ENCODE measurements at regions of chr5 and their contacts with region 1.

Region 1: GRCh38 chr5:175873088-175873454 is 1.7 kb downstream of the CPLX2 start:
- DNase-seq: peak; percentile 65
- H3K4me3 Mint-ChIP-seq: no peak overlapping the region
- H3K27ac Mint-ChIP-seq: no peak overlapping the region
- H3K4me1 Mint-ChIP-seq: peaks cover 2% of the 10 kb centered on the region
- H3K27me3 Mint-ChIP-seq: peaks cover 64% of the 10 kb centered on the region

Region 2: DNA sequence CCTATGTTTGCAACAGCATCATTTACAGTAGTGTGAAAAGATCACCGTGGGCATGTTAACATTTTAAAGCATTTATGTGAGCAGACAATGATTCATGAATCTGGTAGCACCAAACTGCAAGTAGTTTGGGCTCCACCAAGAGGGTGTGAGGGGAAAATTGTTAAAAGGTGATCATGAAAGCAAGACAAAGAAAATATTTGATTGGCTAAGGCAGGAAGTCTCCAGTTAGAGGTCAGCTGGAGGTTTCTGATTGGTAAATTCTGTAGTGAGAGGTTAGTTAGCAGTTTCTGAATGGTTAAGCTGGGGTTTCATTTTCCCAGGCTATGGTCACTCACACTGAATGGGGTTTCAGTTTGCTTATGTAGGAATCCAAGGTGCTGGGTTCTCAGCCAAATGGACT is 415.6 kb before region 1 on chr5:
- intact Hi-C with region 1: no loop called
- DNase-seq: no peak
- H3K4me3 Mint-ChIP-seq: no peak overlapping the region
- H3K27ac Mint-ChIP-seq: no peak overlapping the region
- H3K4me1 Mint-ChIP-seq: peaks cover 7% of the 10 kb centered on the region
- H3K27me3 Mint-ChIP-seq: peaks cover 28% of the 10 kb centered on the region

Region 3: DNA sequence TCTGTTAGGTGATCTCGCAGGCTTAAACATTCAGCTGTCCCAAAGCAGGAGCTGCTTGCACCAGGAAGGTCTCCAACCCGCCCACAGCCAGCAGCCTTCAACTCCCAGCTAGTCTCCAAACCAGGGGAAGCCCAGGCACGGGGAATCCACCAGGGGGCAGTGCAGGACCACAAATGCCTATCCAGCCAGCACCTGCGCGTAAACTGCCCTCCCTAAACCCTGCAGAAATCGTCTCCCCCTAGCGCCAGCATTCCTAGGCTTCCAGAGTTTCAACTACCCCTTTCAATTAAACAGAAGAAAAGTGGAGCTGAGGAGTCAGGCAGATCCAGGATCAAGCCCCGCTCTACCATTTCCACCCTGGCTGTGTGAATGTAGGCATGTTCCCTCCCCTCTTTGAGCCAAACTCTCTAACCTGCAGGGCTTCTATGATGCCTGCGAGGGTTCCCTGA is 143.2 kb before region 1 on chr5:
- intact Hi-C with region 1: loop called (anchors 5 kb)
- DNase-seq: peak; percentile 97
- H3K4me3 Mint-ChIP-seq: no peak overlapping the region
- H3K27ac Mint-ChIP-seq: no peak overlapping the region
- H3K4me1 Mint-ChIP-seq: peaks cover 2% of the 10 kb centered on the region
- H3K27me3 Mint-ChIP-seq: peaks cover 17% of the 10 kb centered on the region

Region 4: DNA sequence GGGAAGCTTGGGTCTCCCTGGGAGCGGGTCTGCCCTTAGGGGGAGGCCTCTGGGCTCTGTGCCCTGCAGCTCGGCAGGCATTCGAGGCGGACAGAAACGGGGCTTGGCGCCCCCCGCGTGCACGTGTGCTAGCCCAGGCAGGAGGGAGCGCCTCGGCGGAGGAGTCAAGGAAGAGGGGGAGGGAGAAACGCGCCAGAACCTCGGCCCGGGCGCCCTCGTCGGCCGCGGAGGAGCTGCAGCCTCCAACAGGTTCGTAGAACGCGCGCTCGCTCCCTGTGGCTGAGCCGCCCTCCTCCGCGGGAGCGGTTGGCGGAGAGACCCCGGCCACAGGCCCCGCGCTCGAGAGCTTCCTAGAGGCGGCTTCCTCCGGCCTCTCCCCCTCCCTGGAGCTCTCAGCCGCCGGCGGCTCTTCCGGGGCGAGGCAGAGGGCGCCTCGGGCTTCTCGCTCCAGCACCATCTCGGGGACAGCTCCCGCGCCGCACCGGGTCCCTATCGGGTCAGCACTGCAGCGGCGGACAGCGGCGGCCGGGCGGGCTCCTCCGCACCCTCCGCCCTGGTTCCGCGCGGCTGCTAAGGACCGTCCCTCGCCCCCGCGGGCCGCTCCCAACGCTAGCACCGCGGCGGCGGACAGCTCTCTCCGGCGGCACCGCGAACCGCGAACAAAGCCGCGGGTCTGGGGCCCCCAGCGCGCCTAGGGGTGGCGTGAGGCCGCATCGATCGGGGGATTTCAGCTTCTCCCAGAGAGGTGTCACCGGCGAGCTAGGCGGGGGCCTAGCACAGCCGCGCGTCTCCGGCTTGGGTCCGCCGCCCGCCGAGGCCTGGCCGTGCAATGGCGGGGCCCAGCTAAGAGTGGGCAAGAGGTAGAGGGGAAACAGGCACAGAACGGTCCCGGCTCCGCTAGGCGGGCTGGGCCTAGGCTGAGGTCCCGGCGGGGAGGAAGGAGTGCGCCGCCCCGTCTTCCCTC is 76.3 kb before region 1 on chr5:
- intact Hi-C with region 1: loop called (anchors 2 kb)
- DNase-seq: peak; percentile 95
- H3K4me3 Mint-ChIP-seq: no peak overlapping the region
- H3K27ac Mint-ChIP-seq: no peak overlapping the region
- H3K4me1 Mint-ChIP-seq: peaks cover 2% of the 10 kb centered on the region
- H3K27me3 Mint-ChIP-seq: peaks cover 39% of the 10 kb centered on the region

Measured in activated CD4-positive, alpha-beta T cell treated with anti-CD3 and anti-CD28 coated beads, Interleukin-2, amount 10 ng/mL, durations not matched to agents 24 days and 14 days (primary cell).